WTC11 (cell line): ENCODE measurements at regions of chr17 and their contacts with region 1.

Region 1: GRCh38 chr17:76726231-76726775 is at the start of gene JMJD6:
- DNase-seq: peak; percentile 96
- ATAC-seq: peak; percentile 92
- H3K4me3 Mint-ChIP-seq: peak within 1 kb of the TSS; percentile 89
- H3K27ac Mint-ChIP-seq: peak within 1 kb of the TSS; percentile 93
- H3K4me1 Mint-ChIP-seq: peaks cover 15% of the 10 kb centered on the region
- H3K27me3 Mint-ChIP-seq: no peaks in the 10 kb centered on the region
- CTCF ChIP-seq: no peak
- total RNA-seq, gene JMJD6: 20.3 to 23.8 TPM (median 21.6 TPM) in 3 replicates

Region 2: DNA sequence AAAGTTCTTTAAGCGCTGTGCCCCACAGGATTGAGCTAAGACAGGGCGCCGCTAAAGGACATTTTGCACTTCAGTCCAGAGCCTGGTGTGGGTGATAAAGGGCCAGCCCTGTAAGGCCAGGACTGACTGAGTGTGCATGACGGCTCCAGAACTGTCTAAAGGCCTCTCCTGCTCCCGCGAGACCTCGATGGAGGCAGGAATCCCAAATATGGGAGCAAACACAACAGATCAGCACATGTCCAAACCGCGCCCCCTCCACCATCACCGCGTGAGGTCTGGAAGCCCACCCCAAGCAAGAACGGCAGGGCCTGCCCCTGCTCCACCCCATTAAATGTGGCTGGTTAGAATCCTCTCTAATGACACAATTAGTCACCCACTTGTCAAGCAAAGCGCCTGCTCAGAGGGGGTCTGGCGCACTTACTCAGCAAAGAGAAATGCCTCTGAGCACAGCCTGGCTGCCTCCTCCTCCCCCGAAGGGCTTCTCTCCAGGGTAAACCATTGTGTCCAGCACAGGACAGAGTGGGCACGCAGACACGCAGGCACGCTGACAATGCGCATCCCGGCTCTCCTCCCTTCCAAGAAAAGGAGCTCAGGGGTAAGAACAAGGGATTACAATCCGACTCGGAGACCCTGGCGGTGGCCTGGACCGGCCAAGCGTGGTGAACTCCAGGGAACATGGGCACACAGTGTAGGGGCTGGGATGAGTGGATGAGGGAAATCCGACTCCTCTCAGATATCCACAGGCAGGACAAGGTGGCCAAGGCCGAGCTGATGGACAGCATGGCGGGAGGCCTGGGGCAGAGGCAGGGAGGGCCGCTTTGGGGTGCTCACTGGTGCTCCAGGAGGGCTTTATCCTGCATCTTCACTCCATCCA is 17.0 kb before region 1 on chr17:
- CTCF ChIA-PET with region 1: interaction called, 12 read pairs
- POLR2A ChIA-PET with region 1: interaction called, 6 read pairs
- DNase-seq: no peak
- ATAC-seq: no peak
- H3K4me3 Mint-ChIP-seq: peak overlapping the region; percentile 74
- H3K27ac Mint-ChIP-seq: no peak overlapping the region
- H3K4me1 Mint-ChIP-seq: peaks cover 34% of the 10 kb centered on the region
- H3K27me3 Mint-ChIP-seq: peaks cover 15% of the 10 kb centered on the region
- CTCF ChIP-seq: no peak

Region 3: DNA sequence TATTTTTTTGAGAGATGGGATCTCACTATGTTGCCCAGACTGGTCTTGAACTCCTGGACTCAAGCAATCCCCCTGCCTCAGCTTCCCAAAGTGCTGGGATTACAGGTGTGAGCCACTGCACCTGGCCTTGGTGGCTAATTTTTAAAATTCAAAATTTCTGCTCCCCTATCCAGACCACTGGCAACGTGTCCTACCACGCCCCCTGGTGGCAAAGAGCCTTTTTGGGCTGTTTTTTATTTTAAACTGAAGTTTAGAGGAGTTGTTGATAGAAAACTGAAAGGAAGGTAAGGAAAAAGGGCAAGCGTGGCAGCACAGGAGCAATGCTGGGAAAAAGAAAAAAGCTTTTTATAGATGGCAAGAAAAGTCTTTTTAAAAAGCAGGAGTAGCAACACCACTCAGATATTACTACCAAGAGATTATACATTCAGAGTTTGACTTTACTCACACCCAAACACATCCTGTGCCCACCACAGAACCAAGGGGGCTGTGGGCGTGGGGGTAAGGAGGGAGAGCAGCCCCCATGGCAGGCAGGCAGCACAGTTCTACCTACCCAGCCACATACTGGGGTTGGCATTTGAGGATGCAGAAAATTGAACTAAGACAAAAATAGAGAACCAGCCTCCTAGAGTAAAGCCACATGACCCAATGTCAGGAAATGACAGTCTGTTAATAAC is 11.3 kb before region 1 on chr17:
- CTCF ChIA-PET with region 1: interaction called, 12 read pairs
- POLR2A ChIA-PET with region 1: interaction called, 4 read pairs
- DNase-seq: peak; percentile 73
- ATAC-seq: no peak
- H3K4me3 Mint-ChIP-seq: no peak overlapping the region
- H3K27ac Mint-ChIP-seq: peak overlapping the region; percentile 40; the same call in 1 of the 2 replicates
- H3K4me1 Mint-ChIP-seq: peaks cover 9% of the 10 kb centered on the region
- H3K27me3 Mint-ChIP-seq: peaks cover 2% of the 10 kb centered on the region
- CTCF ChIP-seq: peak; percentile 68; the same call in 1 of the 2 replicates

Region 4: DNA sequence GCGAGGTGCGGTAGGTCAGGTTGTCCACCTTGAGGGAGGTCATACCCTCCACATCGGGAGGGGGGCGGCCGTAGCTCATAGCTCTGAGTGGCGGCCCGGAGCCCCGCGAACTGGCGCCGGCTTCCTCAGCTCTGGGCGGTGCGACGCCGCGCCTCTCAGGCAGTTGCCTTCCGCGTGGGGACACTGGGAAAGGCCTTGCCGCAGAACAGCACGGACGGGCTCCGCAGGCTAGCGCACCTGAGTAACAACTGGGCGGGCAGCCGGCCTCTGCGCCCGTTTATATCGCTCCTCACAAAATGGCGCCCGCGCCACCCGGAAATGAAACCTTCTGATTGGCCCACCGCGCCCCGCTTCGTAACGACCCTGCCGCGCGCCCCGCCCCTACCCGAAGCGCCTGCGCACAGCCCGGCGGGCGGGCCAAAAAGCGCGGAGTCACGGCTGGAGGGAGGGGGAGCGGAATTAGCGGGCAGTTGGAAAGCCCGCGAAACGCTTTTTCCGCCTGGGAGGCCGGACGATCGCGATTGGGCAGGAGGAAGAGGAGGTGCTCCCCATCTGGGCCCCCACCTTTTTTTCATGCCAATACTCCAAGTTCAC is 10.9 kb after region 1 on chr17 and contains the start of gene SRSF2:
- CTCF ChIA-PET with region 1: interaction called, 3 read pairs
- POLR2A ChIA-PET with region 1: interaction called, 28 read pairs
- DNase-seq: peak; percentile 99
- ATAC-seq: peak; percentile 83
- H3K4me3 Mint-ChIP-seq: peak within 1 kb of the TSS; percentile 99
- H3K27ac Mint-ChIP-seq: peak within 1 kb of the TSS; percentile 99
- H3K4me1 Mint-ChIP-seq: peaks cover 42% of the 10 kb centered on the region
- H3K27me3 Mint-ChIP-seq: no peaks in the 10 kb centered on the region
- CTCF ChIP-seq: no peak
- total RNA-seq, gene SRSF2: 355 to 410 TPM (median 407 TPM) in 3 replicates

Region 5: GRCh38 chr17:76747716-76748363 is 21.5 kb after region 1 on chr17:
- CTCF ChIA-PET with region 1: no interaction called
- POLR2A ChIA-PET with region 1: no interaction called
- DNase-seq: no peak
- ATAC-seq: no peak
- H3K4me3 Mint-ChIP-seq: no peak overlapping the region
- H3K27ac Mint-ChIP-seq: no peak overlapping the region
- H3K4me1 Mint-ChIP-seq: no peaks in the 10 kb centered on the region
- H3K27me3 Mint-ChIP-seq: no peaks in the 10 kb centered on the region
- CTCF ChIP-seq: no peak